Right ventricle myocardium superior (tissue), 1 donor: ENCODE measurements at regions of chr17 and their contacts with region 1.

Region 1: DNA sequence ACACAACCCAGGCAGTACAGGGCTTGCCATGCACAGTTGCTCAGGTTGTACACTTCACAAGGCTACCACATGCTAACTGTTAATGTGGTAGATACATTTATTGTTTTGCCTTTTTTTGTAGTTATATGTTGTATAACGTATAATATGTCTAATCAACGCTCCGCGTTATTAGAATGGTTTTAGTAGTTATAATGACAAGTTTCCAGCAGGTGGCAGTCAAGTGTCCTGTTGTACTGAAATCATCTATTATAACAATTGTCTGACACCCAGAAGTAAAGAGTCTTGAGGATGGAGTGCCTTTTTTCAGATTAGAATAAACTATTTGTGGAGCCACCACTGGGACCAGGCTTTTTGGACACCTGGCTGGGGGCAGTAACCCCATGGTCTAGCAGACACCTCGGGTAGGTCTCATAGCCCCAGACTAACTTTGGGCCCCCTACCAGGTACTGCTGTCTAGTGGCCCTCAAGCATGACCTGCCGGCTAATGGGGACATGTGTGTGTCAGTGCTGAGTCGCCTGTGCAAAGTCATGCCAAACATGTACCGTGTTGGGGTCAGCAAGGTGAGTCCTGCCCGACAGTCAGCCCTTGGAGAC is 32.8 kb downstream of the MYO15A start:
- DNase-seq: no peak
- ATAC-seq: peak; percentile 64

Region 2: GRCh38 chr17:18191967-18192366 is 50.7 kb after region 1 on chr17:
- intact Hi-C with region 1: loop called (anchors 10 kb)
- DNase-seq: no peak
- ATAC-seq: no peak

Region 3: DNA sequence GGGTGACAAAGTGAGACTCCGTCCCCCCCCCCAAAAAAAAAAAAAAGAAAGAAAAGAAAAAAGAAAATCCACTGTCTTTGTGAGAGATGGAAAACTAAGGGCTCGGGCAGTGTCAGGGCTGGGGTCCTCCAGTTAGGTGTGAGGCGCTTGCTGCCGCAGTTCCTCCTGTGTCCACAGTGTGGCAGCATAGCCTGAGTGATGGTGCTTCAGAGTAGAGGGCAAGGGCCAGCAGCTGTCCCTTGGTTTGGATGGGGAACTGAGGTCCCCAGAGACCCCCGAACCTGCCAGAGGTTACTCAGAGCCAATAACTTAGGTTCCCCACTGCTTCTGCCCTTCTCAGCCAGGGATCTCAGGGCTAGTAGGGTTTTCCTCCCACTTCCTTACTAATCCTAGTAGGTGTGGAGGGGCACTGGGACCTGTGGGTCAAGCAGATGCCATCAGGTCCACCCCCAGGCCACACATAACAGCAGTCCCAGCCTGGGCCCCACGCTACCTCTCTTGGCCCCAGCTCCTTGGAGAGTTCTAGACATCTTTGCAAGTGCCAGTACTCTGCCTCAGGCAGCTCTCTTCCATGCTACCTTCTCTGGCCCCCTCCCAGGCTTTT is 76.2 kb after region 1 on chr17:
- intact Hi-C with region 1: loop called (anchors 5 kb)
- DNase-seq: peak; percentile 87
- ATAC-seq: peak; percentile 92